Vagina (tissue), 2 donors: ENCODE measurements at regions of chr5 and their contacts with region 1.

Region 1: DNA sequence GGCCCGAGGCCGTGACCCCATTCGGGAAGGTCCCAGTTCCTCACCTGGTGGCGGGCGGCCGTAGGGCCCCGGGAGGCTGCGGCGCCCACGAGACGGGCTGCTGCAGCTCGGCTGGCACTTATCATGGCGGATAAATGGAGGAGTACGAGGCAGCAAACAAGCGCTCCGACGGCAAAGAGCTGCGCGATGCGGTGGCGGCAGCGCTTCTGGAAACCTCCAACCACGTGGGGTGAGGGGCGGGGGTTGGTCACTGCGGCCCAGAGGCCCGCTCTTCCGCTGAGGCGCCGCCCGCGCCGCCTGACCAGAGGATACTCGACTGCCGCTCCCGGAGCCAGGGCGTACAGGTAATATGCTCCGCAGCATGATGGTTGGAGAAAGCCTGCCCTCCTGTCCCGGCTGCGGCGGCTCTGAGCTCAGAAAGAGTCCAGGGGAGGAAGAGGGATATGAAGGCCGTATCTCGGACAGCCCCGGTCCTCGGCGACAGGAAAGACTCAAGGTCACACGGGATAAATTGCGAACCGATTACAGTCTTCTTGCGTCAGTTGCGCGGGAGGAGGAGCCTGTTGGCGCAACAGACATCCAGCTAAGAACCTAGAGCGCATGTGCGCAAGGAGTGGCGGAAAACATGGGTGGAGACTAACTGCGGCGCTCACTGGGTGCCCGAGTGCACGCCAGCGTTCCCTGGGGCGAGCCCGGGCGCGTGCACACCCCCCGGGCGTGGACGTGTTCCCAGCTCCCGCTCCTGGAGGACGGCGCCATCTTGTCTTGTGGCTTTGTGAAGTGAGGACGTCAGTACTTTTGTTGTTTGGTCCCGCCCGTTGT is at the start of gene HSPA9:
- DNase-seq: peak; percentile 99
- H3K4me3 ChIP-seq: peak within 1 kb of the TSS; percentile 78 to 100
- H3K27ac ChIP-seq: peak within 1 kb of the TSS; percentile 99
- H3K4me1 ChIP-seq: peaks cover 42% of the 10 kb centered on the region
- H3K27me3 ChIP-seq: no peaks in the 10 kb centered on the region
- CTCF ChIP-seq: peak in 2 of 3 experiments; percentile 10 to 16
- POLR2A ChIP-seq: peak in 1 of 2 donors; percentile 91
- total RNA-seq, gene HSPA9: 156 TPM

Region 2: GRCh38 chr5:138515556-138516245 is 59.7 kb before region 1 on chr5:
- intact Hi-C with region 1: no loop called
- DNase-seq: no peak
- H3K4me3 ChIP-seq: no peak overlapping the region
- H3K27ac ChIP-seq: no peak overlapping the region
- H3K4me1 ChIP-seq: no peaks in the 10 kb centered on the region
- H3K27me3 ChIP-seq: no peaks in the 10 kb centered on the region
- CTCF ChIP-seq: no peak
- POLR2A ChIP-seq: no peak

Region 3: GRCh38 chr5:138752951-138753793 is 177.8 kb after region 1 on chr5 and contains the start of gene CTNNA1:
- intact Hi-C with region 1: loop called (anchors 10 kb)
- DNase-seq: peak in 1 of 2 donors; percentile 91
- H3K4me3 ChIP-seq: peak within 1 kb of the TSS; percentile 92 to 94
- H3K27ac ChIP-seq: peak within 1 kb of the TSS; percentile 96
- H3K4me1 ChIP-seq: peaks cover 35% of the 10 kb centered on the region
- H3K27me3 ChIP-seq: no peaks in the 10 kb centered on the region
- CTCF ChIP-seq: no peak
- POLR2A ChIP-seq: peak in 1 of 2 donors; percentile 73
- total RNA-seq, gene CTNNA1: 304 TPM